Right ventricle myocardium inferior (tissue), 1 donor: ENCODE measurements at regions of chr6 and their contacts with region 1.

Region 1: DNA sequence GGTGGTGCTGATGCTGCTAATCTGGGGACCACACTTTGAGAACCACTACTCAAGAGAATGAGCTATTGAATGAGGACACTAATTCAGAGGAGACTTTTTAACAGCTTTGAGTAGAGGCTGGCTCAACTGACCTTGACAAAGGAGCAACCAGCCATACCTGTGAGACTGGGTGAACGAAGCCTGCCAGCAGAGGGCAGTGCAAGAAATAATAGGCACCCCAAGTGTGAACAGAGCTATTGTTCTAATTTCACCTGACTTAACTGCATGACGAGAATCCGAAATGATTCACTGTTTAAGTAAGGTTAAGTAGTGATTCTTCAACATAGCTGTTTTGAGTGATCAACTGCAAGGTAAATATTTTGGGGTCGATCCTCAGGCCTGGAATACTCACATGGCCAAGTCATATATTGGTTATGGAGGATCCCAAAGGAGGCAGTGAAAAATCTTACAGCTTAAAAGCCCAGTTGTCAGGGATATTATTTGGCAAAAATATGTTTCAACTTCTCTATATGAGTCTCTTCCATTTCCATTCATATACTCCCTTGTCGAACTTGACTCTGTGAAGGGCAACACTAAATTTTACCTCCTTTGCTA is 550.5 kb upstream of the MARCKS start:
- DNase-seq: peak; percentile 73
- ATAC-seq: no peak

Region 2: DNA sequence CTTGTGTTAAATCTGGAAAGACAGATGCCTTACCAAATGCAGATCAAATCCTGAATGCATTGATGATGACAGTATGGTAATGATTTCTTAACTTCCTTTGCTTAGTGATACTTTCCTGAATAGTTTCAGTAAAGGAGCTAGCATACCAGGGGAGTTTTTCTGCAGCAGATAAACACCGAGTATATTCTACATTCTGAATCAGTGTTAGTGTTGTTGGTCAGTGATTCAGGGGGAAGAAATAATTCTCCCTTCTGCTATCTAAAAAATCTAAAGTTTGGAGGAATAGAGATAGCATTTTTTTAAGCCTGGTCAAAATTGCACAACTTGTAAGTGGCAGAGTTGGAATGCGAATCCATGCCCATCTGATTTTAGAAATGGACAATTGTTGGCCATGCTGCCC is 38.3 kb after region 1 on chr6:
- intact Hi-C with region 1: no loop called
- DNase-seq: no peak
- ATAC-seq: no peak

Region 3: DNA sequence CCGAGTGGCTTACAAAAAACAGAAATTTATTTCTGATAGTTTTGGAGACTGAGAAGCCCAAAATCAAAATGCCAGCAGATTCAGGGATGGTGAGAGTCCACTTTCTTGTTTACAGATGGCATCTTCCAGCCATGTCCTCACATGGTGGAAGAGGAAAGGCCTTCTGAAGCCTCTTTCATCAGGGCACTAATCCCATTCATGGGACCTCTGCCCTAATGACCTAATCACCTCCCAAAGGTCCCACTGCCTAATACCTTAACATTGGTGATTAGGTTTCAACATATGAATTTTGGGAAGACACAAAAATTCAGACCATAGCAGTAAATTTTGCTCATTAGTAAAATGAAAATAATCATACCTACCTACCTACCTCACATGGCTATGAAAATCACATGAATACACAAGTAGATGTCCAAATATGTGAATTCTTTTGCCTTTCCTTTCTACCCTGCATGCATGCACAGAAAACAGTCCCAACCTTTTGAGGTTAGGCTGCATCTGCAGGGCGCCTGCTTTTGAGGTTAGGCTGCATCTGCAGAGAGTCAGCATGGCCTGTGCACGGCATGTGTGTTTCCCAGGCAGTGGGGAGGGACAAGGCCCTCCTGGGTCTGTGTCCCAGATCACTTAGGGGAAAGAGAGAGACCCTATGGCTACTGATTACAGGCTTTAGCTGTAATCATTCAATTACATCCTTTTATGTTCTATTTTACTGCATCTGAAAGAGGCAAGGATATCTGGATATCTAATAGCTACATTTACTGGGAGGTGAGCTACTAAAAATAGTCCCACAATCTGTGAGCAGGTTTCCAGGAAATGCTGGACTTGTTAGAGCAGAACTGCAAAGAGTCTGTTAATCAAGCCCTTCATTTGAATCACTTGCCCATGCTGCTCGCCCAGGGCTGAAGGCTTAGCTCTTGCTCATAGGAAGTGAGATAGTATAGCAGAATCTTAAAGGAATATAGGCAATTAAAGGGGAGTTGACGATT is 52.8 kb after region 1 on chr6:
- intact Hi-C with region 1: loop called (anchors 5 kb)
- DNase-seq: no peak
- ATAC-seq: no peak